ENCODE measurements at regions of chr5 and their contacts with region 1.

Region 1: DNA sequence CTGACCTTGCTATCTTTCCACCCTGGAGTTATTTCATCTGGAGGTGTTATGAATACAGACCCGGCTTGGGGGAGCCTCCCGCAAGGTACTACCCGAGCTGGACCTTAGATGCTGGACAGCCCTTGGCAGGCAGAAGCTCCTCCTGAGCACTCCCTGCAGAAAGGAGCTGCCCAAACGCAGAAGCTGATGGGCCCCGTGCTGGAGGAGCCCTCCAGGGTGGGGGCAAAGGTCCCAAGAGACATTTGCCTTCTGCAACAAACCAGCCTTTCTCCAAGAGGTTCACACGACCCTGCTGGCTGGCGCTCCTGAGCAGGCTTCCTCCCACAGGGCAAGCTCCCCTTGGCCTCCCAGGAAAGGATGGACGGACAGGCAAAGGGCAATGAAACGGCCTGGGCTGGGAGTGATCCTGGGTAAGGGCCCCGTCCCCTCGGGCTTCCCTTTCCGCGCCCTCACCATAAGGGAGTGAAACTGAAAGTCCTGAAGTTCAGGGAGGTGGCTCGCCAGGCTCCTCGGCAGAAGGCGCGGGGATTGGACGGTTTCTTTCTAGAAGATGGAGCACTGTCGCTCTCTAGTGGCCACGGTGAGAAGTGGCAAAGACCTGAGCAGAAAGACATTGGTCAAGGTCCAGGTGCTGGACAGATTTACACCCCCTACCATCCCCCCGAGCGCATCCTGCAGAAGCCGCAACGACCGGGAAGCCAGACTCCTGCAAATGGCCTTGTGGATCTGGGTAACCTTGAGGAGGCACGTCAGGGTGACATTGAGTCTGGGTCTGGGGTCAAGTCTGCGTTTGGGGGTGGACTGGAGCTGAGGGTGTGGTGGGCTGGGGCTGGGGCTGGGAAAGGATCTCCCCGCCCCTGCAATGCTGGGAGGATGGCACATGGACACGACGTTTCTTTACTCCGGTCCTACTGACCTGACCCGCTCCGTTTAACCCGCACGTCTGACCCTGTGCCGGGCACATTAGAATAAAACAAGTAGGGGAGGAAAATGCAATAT is 56.4 kb downstream of the NEURL1B start:
- DNase-seq: peak; percentile 93
- H3K4me3 Mint-ChIP-seq: peak overlapping the region; percentile 88
- H3K27ac Mint-ChIP-seq: peak overlapping the region; percentile 87
- H3K4me1 Mint-ChIP-seq: peaks cover 24% of the 10 kb centered on the region
- H3K27me3 Mint-ChIP-seq: peaks cover 43% of the 10 kb centered on the region

Region 2: GRCh38 chr5:172479044-172479783 is 218.2 kb before region 1 on chr5:
- CTCF ChIA-PET with region 1: interaction called, 68 read pairs
- DNase-seq: peak; percentile 79
- H3K4me3 Mint-ChIP-seq: no peak overlapping the region
- H3K27ac Mint-ChIP-seq: no peak overlapping the region
- H3K4me1 Mint-ChIP-seq: no peaks in the 10 kb centered on the region
- H3K27me3 Mint-ChIP-seq: peaks cover 5% of the 10 kb centered on the region

Region 3: GRCh38 chr5:172533399-172534228 is 163.8 kb before region 1 on chr5:
- CTCF ChIA-PET with region 1: no interaction called
- DNase-seq: no peak
- H3K4me3 Mint-ChIP-seq: no peak overlapping the region
- H3K27ac Mint-ChIP-seq: no peak overlapping the region
- H3K4me1 Mint-ChIP-seq: no peaks in the 10 kb centered on the region
- H3K27me3 Mint-ChIP-seq: peaks cover 24% of the 10 kb centered on the region

Region 4: GRCh38 chr5:172640822-172641358 is 56.5 kb before region 1 on chr5 and contains the start of gene NEURL1B:
- CTCF ChIA-PET with region 1: interaction called, 13 read pairs
- DNase-seq: peak; percentile 81
- H3K4me3 Mint-ChIP-seq: peak within 1 kb of the TSS; percentile 67
- H3K27ac Mint-ChIP-seq: no peak within 1 kb of the TSS
- H3K4me1 Mint-ChIP-seq: peaks cover 34% of the 10 kb centered on the region
- H3K27me3 Mint-ChIP-seq: peaks cover 80% of the 10 kb centered on the region

Region 5: DNA sequence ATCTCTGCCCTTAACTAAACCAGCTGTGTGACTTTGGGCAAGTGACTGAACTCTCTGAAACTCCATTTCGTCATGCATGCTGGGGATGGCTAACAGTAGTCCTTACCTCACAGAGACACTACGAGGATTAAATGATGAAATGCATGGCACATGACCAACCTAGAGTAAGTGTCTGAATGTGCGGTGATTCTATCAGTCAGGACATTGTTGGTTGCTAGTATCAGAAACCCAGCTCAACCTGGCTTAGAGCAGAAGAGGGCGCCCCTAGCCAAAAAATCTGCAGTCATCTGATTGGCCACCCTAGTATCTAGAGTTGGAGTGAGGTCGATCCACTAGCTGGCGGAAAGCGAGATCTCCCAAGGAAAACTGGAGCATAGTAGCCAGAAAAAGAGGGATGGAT is 31.2 kb before region 1 on chr5:
- CTCF ChIA-PET with region 1: interaction called, 12 read pairs
- DNase-seq: no peak
- H3K4me3 Mint-ChIP-seq: no peak overlapping the region
- H3K27ac Mint-ChIP-seq: no peak overlapping the region
- H3K4me1 Mint-ChIP-seq: no peaks in the 10 kb centered on the region
- H3K27me3 Mint-ChIP-seq: peaks cover 3% of the 10 kb centered on the region

Region 6: DNA sequence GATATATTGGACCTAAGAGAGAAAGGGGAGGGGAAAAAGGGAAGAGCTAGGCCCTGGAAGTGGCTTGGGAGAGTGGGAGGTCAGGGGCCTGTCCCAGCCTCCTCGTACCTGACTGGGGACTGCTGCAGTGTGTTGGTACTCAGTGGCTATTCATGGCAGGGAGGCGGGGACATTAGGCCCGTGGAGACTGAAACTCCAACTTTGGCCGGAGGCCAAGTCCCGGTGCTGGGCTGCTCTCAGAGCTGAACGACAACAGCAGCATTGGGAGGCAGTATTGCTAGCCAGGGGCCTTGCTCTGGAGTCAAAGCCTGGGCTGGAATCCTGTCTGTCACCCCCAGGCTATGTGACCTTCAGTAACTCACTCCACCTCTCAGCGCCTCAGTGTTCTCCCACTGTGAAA is 18.5 kb before region 1 on chr5:
- CTCF ChIA-PET with region 1: no interaction called
- DNase-seq: no peak
- H3K4me3 Mint-ChIP-seq: no peak overlapping the region
- H3K27ac Mint-ChIP-seq: no peak overlapping the region
- H3K4me1 Mint-ChIP-seq: peaks cover 5% of the 10 kb centered on the region
- H3K27me3 Mint-ChIP-seq: peaks cover 14% of the 10 kb centered on the region

Region 7: GRCh38 chr5:172707285-172708182 is 10.1 kb after region 1 on chr5:
- CTCF ChIA-PET with region 1: interaction called, 16 read pairs
- DNase-seq: peak; percentile 38
- H3K4me3 Mint-ChIP-seq: no peak overlapping the region
- H3K27ac Mint-ChIP-seq: no peak overlapping the region
- H3K4me1 Mint-ChIP-seq: no peaks in the 10 kb centered on the region
- H3K27me3 Mint-ChIP-seq: peaks cover 54% of the 10 kb centered on the region